ENCODE measurements at regions of chr7 and their contacts with region 1.

Region 1: GRCh38 chr7:55086413-55087201 is 67.8 kb downstream of the EGFR start:
- DNase-seq: peak; percentile 45
- H3K4me3 ChIP-seq: peak overlapping the region; percentile 52
- H3K27ac ChIP-seq: peak overlapping the region; percentile 97
- H3K27me3 ChIP-seq: no peaks in the 10 kb centered on the region
- CTCF ChIP-seq: no peak

Region 2: DNA sequence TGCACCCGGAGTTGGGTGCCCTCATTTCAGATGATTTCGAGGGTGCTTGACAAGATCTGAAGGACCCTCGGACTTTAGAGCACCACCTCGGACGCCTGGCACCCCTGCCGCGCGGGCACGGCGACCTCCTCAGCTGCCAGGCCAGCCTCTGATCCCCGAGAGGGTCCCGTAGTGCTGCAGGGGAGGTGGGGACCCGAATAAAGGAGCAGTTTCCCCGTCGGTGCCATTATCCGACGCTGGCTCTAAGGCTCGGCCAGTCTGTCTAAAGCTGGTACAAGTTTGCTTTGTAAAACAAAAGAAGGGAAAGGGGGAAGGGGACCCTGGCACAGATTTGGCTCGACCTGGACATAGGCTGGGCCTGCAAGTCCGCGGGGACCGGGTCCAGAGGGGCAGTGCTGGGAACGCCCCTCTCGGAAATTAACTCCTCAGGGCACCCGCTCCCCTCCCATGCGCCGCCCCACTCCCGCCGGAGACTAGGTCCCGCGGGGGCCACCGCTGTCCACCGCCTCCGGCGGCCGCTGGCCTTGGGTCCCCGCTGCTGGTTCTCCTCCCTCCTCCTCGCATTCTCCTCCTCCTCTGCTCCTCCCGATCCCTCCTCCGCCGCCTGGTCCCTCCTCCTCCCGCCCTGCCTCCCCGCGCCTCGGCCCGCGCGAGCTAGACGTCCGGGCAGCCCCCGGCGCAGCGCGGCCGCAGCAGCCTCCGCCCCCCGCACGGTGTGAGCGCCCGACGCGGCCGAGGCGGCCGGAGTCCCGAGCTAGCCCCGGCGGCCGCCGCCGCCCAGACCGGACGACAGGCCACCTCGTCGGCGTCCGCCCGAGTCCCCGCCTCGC is 68.0 kb before region 1 on chr7 and contains the start of gene EGFR:
- CTCF ChIA-PET with region 1: no interaction called
- POLR2A ChIA-PET with region 1: interaction called, 10 read pairs
- DNase-seq: peak; percentile 34
- H3K4me3 ChIP-seq: peak within 1 kb of the TSS; percentile 77
- H3K27ac ChIP-seq: peak within 1 kb of the TSS; percentile 47
- H3K27me3 ChIP-seq: no peaks in the 10 kb centered on the region
- CTCF ChIP-seq: no peak
- polyA plus RNA-seq, gene EGFR: 59.0 and 62.6 TPM in 2 replicates

Region 3: GRCh38 chr7:55132890-55133551 is 46.4 kb after region 1 on chr7:
- CTCF ChIA-PET with region 1: no interaction called
- POLR2A ChIA-PET with region 1: interaction called, 10 read pairs
- DNase-seq: peak; percentile 98
- H3K4me3 ChIP-seq: peak overlapping the region; percentile 42
- H3K27ac ChIP-seq: peak overlapping the region; percentile 100
- H3K27me3 ChIP-seq: no peaks in the 10 kb centered on the region
- CTCF ChIP-seq: no peak

Region 4: DNA sequence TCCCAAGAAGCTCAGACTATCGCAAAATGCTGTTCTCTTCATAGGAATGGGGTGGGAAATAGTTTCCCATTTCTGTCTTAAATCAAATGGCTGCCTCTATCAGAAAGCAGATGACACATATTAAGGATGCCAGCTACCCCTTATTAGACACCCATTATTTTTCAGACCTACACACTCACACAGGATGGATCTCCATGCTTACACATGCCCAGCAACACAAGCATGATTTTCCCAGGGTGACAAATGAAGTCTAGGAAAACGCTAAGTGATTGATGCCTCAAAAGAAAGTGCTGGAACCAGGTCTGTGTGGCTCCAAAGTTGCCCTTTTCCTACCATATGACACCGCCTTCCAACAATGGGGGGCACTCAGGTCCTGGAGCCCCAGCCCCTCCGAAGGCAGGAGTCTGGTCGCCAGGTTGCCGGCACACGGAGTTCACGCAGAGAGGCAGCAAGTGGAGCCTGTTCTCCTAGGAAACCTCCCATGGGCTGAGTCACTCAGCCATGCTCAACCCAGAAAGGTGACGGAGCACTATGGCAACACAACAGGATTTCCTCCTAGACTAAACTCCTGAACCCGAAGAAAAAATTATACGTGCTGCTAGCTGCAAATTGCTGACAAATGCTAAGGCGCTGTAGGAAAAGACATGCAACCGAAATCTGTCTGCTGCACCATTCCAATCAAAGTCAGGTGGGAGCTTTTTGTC is 465.9 kb after region 1 on chr7:
- CTCF ChIA-PET with region 1: interaction called, 10 read pairs
- POLR2A ChIA-PET with region 1: no interaction called
- DNase-seq: no peak
- H3K4me3 ChIP-seq: no peak overlapping the region
- H3K27ac ChIP-seq: no peak overlapping the region
- H3K27me3 ChIP-seq: no peaks in the 10 kb centered on the region
- CTCF ChIP-seq: no peak